ENCODE measurements at regions of chr6 and their contacts with region 1.

Region 1: GRCh38 chr6:139375232-139376016 is 976 bp upstream of the CITED2 start:
- DNase-seq: peak; percentile 89
- ATAC-seq: peak; percentile 78 to 89 (median 82)
- H3K4me3 ChIP-seq: peak overlapping the region; percentile 69 to 97 (median 92)
- H3K27ac ChIP-seq: peak overlapping the region; percentile 90 to 100 (median 98)
- H3K4me1 ChIP-seq: peaks cover 0 to 32% (median 26%) of the 10 kb centered on the region in 9 donors
- H3K27me3 ChIP-seq: no peaks in the 10 kb centered on the region
- CTCF ChIP-seq: peak in 1 of 9 donors; percentile 9

Region 2: DNA sequence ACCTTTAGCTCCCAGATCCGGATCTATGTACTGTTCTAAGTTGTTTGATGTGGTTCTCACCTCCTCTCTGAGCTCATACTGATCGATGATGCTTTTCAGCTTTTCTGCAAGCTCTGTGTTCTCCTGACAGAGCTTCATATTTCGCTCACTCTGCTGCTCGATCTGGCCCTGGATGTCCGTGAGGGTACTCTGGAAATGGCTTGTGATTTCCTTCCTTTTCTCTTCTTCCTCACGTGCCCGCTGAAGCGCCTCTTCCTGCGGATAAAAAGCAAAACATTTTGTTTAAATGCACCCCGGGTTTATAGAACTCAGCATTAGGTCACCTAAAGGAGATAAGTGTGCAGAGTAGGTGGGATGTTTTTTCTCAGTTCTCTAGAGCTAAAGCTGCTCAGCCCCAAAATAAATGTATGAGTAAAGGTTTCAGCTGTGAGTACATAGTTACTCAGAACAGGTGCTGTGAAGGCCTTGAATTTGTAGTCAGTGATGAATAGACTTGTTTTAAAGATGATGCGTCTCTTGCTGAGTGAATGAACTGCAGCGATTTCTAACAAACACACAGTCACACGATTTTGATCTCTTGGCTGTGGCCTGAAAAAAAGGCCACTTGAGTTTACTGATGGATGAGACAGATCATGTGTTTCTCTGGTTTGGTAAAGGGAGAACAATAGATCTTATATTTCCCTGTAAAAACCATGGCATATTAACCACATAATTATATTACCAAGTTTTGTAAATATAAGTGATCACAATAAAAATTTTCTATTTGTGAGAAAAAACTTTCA is 112.7 kb before region 1 on chr6:
- intact Hi-C with region 1: no loop called
- DNase-seq: no peak
- ATAC-seq: no peak
- H3K4me3 ChIP-seq: no peak overlapping the region
- H3K27ac ChIP-seq: peak overlapping the region in 1 of 10 donors; percentile 28
- H3K4me1 ChIP-seq: peaks cover 0 to 12% (median 1%) of the 10 kb centered on the region in 9 donors
- H3K27me3 ChIP-seq: no peaks in the 10 kb centered on the region
- CTCF ChIP-seq: no peak

Region 3: GRCh38 chr6:139296927-139297326 is 78.5 kb before region 1 on chr6:
- intact Hi-C with region 1: no loop called
- DNase-seq: no peak
- ATAC-seq: peak in 2 of 8 donors; percentile 31 to 50
- H3K4me3 ChIP-seq: no peak overlapping the region
- H3K27ac ChIP-seq: peak overlapping the region in 2 of 10 donors; percentile 3 to 78
- H3K4me1 ChIP-seq: peaks cover 0 to 51% (median 8%) of the 10 kb centered on the region in 9 donors
- H3K27me3 ChIP-seq: no peaks in the 10 kb centered on the region
- CTCF ChIP-seq: no peak

Region 4: GRCh38 chr6:139515511-139515910 is 140.1 kb after region 1 on chr6:
- intact Hi-C with region 1: loop called in 3 of 10 experiments (anchors 2 to 10 kb)
- DNase-seq: no peak
- ATAC-seq: no peak
- H3K4me3 ChIP-seq: no peak overlapping the region
- H3K27ac ChIP-seq: no peak overlapping the region
- H3K4me1 ChIP-seq: peaks cover 0 to 11% (median 8%) of the 10 kb centered on the region in 9 donors
- H3K27me3 ChIP-seq: no peaks in the 10 kb centered on the region
- CTCF ChIP-seq: no peak

Region 5: GRCh38 chr6:139764498-139764986 is 389.1 kb after region 1 on chr6:
- intact Hi-C with region 1: loop called in 7 of 10 experiments (anchors 5 to 10 kb)
- DNase-seq: peak in 1 of 2 donors; percentile 48
- ATAC-seq: peak; percentile 90 to 99 (median 96)
- H3K4me3 ChIP-seq: no peak overlapping the region
- H3K27ac ChIP-seq: peak overlapping the region; percentile 33 to 83 (median 78)
- H3K4me1 ChIP-seq: peaks cover 11 to 43% (median 30%) of the 10 kb centered on the region in 9 donors
- H3K27me3 ChIP-seq: no peaks in the 10 kb centered on the region
- CTCF ChIP-seq: no peak

Region 6: DNA sequence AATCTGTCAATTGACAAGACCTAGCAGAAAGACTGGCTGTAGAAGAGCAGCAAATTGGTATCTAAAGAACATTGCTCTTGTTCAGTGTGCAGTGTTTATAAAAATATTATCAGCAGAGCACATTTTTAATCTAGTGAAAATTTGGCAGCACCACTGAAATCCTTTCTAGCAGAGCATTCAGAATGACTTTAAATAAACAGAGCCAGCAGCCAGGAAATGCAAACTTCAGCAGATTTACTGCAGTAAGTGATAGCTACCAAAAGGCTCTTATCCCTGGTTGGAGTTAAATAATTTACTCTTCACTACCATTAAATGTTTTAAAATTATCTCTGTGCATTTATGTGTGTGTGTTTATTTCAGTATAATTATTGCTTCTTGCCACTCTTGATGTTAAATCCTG is 590.0 kb after region 1 on chr6:
- intact Hi-C with region 1: loop called in 2 of 10 experiments (anchors 10 kb)
- DNase-seq: no peak
- ATAC-seq: peak in 5 of 8 donors; percentile 22 to 51 (median 42)
- H3K4me3 ChIP-seq: no peak overlapping the region
- H3K27ac ChIP-seq: peak overlapping the region in 8 of 10 donors; percentile 2 to 67 (median 42)
- H3K4me1 ChIP-seq: peaks cover 0 to 43% (median 15%) of the 10 kb centered on the region in 9 donors
- H3K27me3 ChIP-seq: no peaks in the 10 kb centered on the region
- CTCF ChIP-seq: no peak

Region 7: GRCh38 chr6:139990856-139991465 is 615.5 kb after region 1 on chr6:
- intact Hi-C with region 1: loop called in 3 of 10 experiments (anchors 5 to 10 kb)
- DNase-seq: no peak
- ATAC-seq: peak in 6 of 8 donors; percentile 67 to 84 (median 76)
- H3K4me3 ChIP-seq: no peak overlapping the region
- H3K27ac ChIP-seq: peak overlapping the region in 8 of 10 donors; percentile 7 to 64 (median 40)
- H3K4me1 ChIP-seq: peaks cover 0 to 20% (median 16%) of the 10 kb centered on the region in 9 donors
- H3K27me3 ChIP-seq: no peaks in the 10 kb centered on the region
- CTCF ChIP-seq: no peak

Region 8: DNA sequence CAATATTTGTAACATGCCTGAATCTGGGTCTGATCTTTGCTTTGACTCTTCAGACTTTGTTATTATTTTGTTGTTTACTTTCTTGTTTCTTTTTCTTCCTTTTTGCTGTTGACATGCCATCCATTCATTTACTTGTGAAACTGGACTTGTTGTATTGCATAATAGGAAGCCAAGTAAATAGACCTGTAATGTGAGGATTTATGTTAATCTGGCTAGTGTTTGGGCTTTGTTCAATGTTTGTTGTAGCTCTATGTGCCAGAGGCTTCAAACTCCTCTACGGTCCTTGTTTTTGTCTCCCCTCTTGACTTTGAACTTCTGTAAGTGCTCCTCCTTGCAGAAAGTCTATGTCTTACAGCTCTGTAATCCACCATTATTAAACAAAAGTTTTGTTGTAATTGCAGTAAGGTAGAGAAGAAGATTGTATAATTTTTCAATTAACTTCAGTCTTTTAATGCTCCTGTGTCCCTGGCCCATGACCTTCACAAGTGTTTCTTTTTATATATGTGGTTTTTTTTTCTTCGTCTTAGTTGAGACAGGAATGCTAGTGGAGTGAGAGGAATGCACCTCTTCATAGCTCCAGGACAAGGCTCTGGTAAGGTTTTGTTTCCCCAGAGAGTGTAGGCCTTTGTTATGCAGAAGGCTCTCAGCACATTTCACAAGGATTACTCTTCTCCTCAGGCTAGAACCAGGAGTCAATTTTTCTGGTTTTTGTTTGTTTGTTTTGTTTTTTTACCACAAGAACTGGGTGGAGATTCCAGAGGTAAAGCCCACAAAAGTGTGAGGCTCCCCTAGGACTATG is 1060.8 kb after region 1 on chr6:
- intact Hi-C with region 1: loop called in 7 of 10 experiments (anchors 1 to 10 kb)
- DNase-seq: no peak
- ATAC-seq: no peak
- H3K4me3 ChIP-seq: no peak overlapping the region
- H3K27ac ChIP-seq: no peak overlapping the region
- H3K4me1 ChIP-seq: peaks cover 0 to 33% (median 10%) of the 10 kb centered on the region in 9 donors
- H3K27me3 ChIP-seq: no peaks in the 10 kb centered on the region
- CTCF ChIP-seq: no peak

Region 9: DNA sequence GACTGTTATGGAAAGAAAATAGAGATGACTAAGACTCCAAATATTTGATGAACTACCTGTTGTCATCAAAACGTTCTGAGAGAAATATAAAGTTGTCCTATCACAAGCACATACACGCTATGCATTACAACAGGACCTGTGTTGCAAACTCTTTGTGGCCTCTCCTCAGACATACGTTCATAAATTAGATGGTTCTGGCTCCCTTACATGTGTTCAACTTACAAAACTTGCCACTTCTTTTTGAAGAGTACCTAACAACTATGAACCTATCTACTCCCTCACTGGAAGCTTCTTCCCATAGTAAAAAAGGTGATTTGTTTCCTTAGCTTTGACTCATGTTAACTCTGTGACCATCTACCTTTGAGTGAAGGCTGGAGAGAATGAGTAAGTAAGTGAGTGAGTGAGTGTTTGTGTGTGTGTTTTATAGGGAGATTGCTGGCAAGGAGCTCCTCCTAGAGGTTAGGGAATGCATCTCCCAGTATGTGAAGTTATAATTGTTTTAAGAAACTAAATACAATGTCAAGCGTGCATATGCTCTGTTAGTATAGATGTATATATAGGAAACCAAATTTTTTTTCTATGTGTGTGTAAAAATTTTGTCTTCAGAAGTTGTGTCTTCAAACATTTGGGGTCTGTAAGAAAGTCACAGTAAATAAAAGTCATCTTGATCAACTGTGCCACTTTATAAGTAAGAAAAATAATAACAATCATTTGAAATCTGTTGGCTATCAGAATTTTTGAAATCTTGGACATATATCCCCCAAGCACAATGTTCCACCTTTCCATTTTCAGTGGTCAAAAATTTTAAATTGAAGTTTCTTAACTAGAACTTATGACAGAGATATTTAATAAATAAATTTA is 1546.2 kb after region 1 on chr6:
- intact Hi-C with region 1: loop called in 7 of 10 experiments (anchors 5 to 10 kb)
- DNase-seq: peak in 1 of 2 donors; percentile 22
- ATAC-seq: peak; percentile 46 to 86 (median 70)
- H3K4me3 ChIP-seq: no peak overlapping the region
- H3K27ac ChIP-seq: no peak overlapping the region
- H3K4me1 ChIP-seq: no peaks in the 10 kb centered on the region
- H3K27me3 ChIP-seq: no peaks in the 10 kb centered on the region
- CTCF ChIP-seq: peak; percentile 27 to 73 (median 64)